Caco-2 (cell line): ENCODE measurements at regions of chr6 and their contacts with region 1.

Region 1: DNA sequence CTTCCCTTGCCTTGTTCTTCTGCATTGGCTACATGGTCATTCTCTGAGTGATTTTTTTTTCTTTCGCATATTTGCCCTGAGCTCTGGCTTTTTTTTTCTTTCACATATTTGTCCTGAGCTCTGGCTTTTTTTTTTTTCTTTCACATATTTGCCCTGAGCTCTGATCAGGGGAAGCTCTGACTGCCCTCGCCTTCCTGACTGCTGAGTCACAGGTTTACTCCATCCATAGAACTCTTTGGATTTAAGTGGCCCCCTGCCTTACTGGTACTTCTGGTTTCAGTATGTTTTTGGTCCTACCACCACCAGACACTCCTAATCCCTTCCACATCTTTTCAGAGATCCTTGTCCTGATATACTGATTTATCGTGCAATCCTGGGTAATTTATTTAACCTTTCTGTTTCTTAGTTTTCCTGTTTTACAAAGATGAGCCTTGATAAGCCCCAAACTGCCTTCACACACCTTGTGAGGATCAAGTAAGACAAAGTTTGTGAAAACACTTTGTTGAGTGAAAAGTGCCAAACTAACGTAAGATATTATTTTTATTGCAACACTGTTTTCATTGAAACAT is 201.2 kb downstream of the OGFRL1 start:
- DNase-seq: peak; percentile 86 to 91
- H3K4me3 ChIP-seq: no peak overlapping the region
- H3K4me3 Mint-ChIP-seq: peak overlapping the region; percentile 46
- H3K27ac Mint-ChIP-seq: peak overlapping the region; percentile 87
- H3K4me1 ChIP-seq: peaks cover 44% of the 10 kb centered on the region
- H3K4me1 Mint-ChIP-seq: peaks cover 22% of the 10 kb centered on the region
- H3K27me3 ChIP-seq: no peaks in the 10 kb centered on the region
- H3K27me3 Mint-ChIP-seq: no peaks in the 10 kb centered on the region
- CTCF ChIP-seq: no peak

Region 2: GRCh38 chr6:71404145-71404966 is 85.5 kb before region 1 on chr6:
- CTCF ChIA-PET with region 1: no interaction called
- POLR2A ChIA-PET with region 1: interaction called, 6 read pairs
- intact Hi-C with region 1: loop called (anchors 1 kb)
- DNase-seq: peak in 1 of 2 experiments; percentile 61
- H3K4me3 ChIP-seq: no peak overlapping the region
- H3K4me3 Mint-ChIP-seq: peak overlapping the region; percentile 57
- H3K27ac Mint-ChIP-seq: peak overlapping the region; percentile 87
- H3K4me1 ChIP-seq: peaks cover 54% of the 10 kb centered on the region
- H3K4me1 Mint-ChIP-seq: peaks cover 21% of the 10 kb centered on the region
- H3K27me3 ChIP-seq: no peaks in the 10 kb centered on the region
- H3K27me3 Mint-ChIP-seq: no peaks in the 10 kb centered on the region
- CTCF ChIP-seq: no peak

Region 3: GRCh38 chr6:71502961-71503360 is 13.1 kb after region 1 on chr6:
- CTCF ChIA-PET with region 1: interaction called, 3 read pairs
- POLR2A ChIA-PET with region 1: interaction called, 6 read pairs
- intact Hi-C with region 1: loop called (anchors 1 kb)
- DNase-seq: no peak
- H3K4me3 ChIP-seq: no peak overlapping the region
- H3K4me3 Mint-ChIP-seq: no peak overlapping the region
- H3K27ac Mint-ChIP-seq: no peak overlapping the region
- H3K4me1 ChIP-seq: peaks cover 48% of the 10 kb centered on the region
- H3K4me1 Mint-ChIP-seq: peaks cover 25% of the 10 kb centered on the region
- H3K27me3 ChIP-seq: no peaks in the 10 kb centered on the region
- H3K27me3 Mint-ChIP-seq: no peaks in the 10 kb centered on the region
- CTCF ChIP-seq: no peak

Region 4: DNA sequence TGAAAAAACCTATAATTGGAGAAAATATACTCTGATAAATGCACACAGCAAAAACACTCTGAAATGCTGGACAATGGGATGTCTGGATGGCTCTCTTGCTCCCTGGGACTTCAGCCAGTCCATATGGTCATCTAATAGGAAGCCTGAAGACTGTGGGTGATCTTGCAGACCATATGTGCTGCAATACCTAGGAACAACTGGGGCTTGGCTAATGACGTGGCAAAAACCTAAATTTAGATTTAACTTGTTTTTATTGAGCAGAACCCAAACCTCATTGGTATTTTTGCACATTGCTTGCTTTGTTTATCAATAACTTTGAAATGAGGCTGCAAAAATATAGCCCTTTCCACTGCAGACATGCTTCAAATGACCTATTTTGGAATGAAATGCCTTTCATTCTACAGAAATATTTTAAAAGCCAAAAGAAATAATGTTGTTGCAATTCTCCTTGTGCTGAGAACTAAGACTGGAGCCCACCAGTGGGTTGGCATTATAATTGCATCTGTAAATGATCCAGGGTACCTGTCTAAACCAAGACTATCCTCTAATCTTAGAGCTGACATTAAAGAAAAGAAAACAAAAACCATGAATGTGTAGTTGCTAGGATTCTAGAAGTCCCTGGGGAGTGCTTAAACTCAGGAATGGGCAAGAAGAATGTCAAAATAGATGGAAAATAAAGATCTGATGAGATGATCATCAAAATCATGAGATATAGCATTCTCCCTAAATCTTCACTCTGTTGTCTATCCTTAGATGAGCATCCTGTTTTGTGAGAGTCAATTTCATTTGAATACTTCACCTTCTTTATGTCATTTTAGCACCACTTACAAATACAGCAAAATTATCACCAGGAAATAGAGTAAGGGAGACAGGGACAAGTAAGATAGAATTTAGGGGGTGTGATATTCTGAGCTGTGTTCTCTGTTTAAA is 244.4 kb after region 1 on chr6:
- CTCF ChIA-PET with region 1: no interaction called
- POLR2A ChIA-PET with region 1: no interaction called
- intact Hi-C with region 1: no loop called
- DNase-seq: no peak
- H3K4me3 ChIP-seq: no peak overlapping the region
- H3K4me3 Mint-ChIP-seq: no peak overlapping the region
- H3K27ac Mint-ChIP-seq: no peak overlapping the region
- H3K4me1 ChIP-seq: no peaks in the 10 kb centered on the region
- H3K4me1 Mint-ChIP-seq: no peaks in the 10 kb centered on the region
- H3K27me3 ChIP-seq: no peaks in the 10 kb centered on the region
- H3K27me3 Mint-ChIP-seq: no peaks in the 10 kb centered on the region
- CTCF ChIP-seq: no peak